ENCODE measurements at regions of chr11 and their contacts with region 1.

Region 1: DNA sequence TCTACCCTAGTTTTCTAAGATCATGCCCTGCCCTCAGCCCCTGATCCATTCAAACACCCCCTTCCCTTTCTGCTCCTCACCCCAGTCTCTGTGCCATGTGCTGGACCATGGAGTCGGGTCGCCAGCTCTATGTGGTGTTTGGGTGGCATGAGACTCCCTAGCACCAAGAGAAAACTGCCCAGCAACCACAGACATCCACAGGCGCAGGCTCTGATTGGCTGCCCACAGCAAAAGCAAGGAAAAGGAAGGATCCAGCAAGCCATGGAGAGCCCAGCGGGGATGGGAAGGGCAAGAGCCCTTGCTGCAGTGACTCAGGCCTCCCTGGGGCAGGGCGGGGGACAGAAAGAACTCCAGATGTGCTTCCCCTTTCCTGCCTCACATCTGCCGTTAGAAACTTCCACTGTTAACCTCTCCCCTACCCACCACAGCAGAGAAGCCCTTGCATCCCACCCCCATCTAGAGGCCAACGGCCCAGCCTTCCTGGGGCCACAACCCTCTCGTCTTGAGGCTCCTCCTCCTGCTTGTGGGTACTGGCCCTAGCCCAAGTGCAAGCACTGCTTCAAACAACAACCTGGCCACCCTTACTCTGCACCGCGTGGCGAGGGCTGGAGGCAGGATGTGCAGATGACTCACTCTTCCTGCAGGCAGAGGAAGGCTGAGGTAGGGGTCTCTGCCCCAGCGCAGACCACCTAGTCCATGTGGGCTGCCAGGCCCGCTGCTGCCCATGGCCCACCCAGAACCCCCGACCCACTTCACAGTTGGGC is 9.7 kb upstream of the AHNAK start:
- DNase-seq: peak; percentile 96
- H3K4me3 ChIP-seq: peak overlapping the region; percentile 1 to 20 (median 8)
- H3K27ac ChIP-seq: peak overlapping the region; percentile 67
- H3K4me1 ChIP-seq: peaks cover 99% of the 10 kb centered on the region
- H3K27me3 ChIP-seq: no peaks in the 10 kb centered on the region
- CTCF ChIP-seq: no peak

Region 2: DNA sequence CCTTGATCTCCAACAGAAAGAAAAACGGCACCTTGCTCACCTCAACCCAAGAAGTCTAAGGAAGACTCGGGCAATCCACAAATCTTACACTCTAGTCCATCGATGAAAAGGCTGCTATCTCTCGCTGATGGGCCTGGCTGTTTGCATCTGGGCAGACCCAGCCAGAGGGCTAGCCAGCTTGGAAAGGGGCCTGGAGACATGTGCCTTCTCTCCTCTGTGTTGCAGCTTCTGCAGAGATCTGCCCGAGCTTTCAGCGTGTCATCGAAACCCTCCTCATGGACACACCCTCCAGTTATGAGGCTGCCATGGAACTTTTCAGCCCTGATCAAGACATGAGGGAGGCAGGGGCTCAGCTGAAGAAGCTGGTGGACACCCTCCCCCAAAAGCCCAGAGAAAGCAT is 134.3 kb before region 1 on chr11:
- CTCF ChIA-PET with region 1: interaction called, 16 read pairs
- dilution Hi-C with region 1: no loop called
- in situ Hi-C with region 1: loop called in 1 of 2 experiments (anchors 5 kb)
- intact Hi-C with region 1: loop called (anchors 1 kb)
- DNase-seq: no peak
- H3K4me3 ChIP-seq: no peak overlapping the region
- H3K27ac ChIP-seq: no peak overlapping the region
- H3K4me1 ChIP-seq: peaks cover 4% of the 10 kb centered on the region
- H3K27me3 ChIP-seq: peaks cover 3% of the 10 kb centered on the region
- CTCF ChIP-seq: no peak

Region 3: DNA sequence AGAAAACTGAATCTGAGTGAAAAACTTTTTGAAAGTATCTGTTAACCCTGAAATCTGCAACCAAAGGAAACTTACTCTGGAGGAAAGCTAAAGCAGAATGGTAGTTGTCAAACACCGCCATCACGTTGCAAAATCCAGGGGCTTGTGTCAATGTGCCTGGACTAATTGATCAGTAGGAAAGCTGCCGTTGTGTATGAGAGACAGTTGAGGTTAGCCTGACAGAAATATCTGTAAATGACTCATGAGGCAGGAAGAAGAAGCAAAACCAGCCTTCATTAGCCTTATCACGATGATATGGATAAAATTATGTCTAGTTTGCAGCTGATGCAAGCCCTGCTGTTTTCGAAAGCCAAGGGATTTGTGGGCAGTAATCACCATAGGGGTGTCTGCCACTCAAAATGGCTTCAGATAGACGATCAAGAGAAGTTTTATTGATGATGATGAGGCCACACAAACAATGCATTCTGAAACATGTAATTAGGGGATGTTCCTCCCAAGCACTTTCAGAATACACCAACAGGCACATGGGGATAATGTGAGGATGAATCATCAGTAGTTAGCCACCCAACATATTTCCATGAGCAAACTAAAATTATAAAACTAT is 128.6 kb before region 1 on chr11:
- CTCF ChIA-PET with region 1: interaction called, 16 read pairs
- dilution Hi-C with region 1: no loop called
- in situ Hi-C with region 1: loop called in 1 of 2 experiments (anchors 5 kb)
- intact Hi-C with region 1: loop called (anchors 1 kb)
- DNase-seq: no peak
- H3K4me3 ChIP-seq: no peak overlapping the region
- H3K27ac ChIP-seq: no peak overlapping the region
- H3K4me1 ChIP-seq: peaks cover 4% of the 10 kb centered on the region
- H3K27me3 ChIP-seq: peaks cover 3% of the 10 kb centered on the region
- CTCF ChIP-seq: no peak

Region 4: GRCh38 chr11:62497132-62497915 is 59.0 kb before region 1 on chr11:
- CTCF ChIA-PET with region 1: no interaction called
- dilution Hi-C with region 1: loop called (anchors 10 kb)
- in situ Hi-C with region 1: no loop called
- intact Hi-C with region 1: loop called (anchors 1 kb)
- DNase-seq: peak; percentile 84
- H3K4me3 ChIP-seq: no peak overlapping the region
- H3K27ac ChIP-seq: peak overlapping the region; percentile 66
- H3K4me1 ChIP-seq: peaks cover 35% of the 10 kb centered on the region
- H3K27me3 ChIP-seq: no peaks in the 10 kb centered on the region
- CTCF ChIP-seq: peak; percentile 44 to 63

Region 5: GRCh38 chr11:62542750-62543567 is 13.3 kb before region 1 on chr11:
- CTCF ChIA-PET with region 1: interaction called, 37 read pairs
- dilution Hi-C with region 1: no loop called
- in situ Hi-C with region 1: no loop called
- intact Hi-C with region 1: loop called (anchors 1 kb)
- DNase-seq: peak; percentile 78
- H3K4me3 ChIP-seq: peak overlapping the region; percentile 82 to 99 (median 91)
- H3K27ac ChIP-seq: peak overlapping the region; percentile 86
- H3K4me1 ChIP-seq: peaks cover 59% of the 10 kb centered on the region
- H3K27me3 ChIP-seq: no peaks in the 10 kb centered on the region
- CTCF ChIP-seq: peak; percentile 78 to 98

Region 6: DNA sequence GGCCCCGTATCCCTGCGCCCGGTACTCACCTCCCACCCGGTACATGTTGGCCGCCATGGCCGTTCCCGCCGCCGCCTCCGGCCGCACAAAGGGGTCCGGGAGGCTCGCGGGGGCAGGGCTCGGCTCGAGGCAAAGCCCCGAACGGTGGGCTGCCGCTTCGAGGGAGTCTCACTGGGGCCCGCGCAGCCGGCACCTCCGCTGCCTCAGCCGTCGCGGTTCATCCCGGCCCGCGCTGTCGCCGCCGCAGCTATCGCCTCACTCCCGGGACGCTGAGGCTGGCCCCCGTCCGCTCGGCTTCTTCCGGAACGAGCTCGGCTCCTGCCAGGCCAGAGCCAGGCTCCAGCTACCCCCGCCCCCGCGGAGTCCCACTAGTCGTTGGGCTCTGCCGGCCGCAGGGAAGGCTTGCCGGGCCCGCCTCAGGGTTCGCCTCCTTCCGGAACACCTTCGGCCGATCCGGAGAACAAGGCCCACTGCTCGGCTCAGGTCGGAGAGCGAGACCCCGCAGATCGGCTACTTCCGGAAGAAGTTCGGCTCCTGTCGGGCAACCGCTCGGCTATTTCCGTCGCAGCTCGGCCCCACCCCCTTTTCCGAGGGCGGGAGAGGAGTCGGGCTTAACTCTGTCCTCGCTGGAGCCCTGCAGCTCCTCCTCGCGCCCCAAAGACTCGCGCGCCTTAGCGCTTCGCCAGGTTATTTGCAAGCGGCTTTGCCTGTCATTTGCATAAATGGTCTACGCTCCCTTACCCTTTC is 45.3 kb after region 1 on chr11 and contains the start of gene MTA2:
- CTCF ChIA-PET with region 1: no interaction called
- dilution Hi-C with region 1: loop called (anchors 5 kb)
- in situ Hi-C with region 1: no loop called
- intact Hi-C with region 1: no loop called
- DNase-seq: peak; percentile 99
- H3K4me3 ChIP-seq: peak within 1 kb of the TSS; percentile 68 to 88 (median 78)
- H3K27ac ChIP-seq: peak within 1 kb of the TSS; percentile 66
- H3K4me1 ChIP-seq: peaks cover 30% of the 10 kb centered on the region
- H3K27me3 ChIP-seq: no peaks in the 10 kb centered on the region
- CTCF ChIP-seq: no peak
- total RNA-seq, gene MTA2: 157 to 169 TPM

Region 7: GRCh38 chr11:62627714-62628113 is 71.4 kb after region 1 on chr11:
- CTCF ChIA-PET with region 1: interaction called, 16 read pairs
- dilution Hi-C with region 1: no loop called
- in situ Hi-C with region 1: no loop called
- intact Hi-C with region 1: no loop called
- DNase-seq: no peak
- H3K4me3 ChIP-seq: no peak overlapping the region
- H3K27ac ChIP-seq: no peak overlapping the region
- H3K4me1 ChIP-seq: no peaks in the 10 kb centered on the region
- H3K27me3 ChIP-seq: no peaks in the 10 kb centered on the region
- CTCF ChIP-seq: peak in 1 of 2 donors; percentile 23

Region 8: GRCh38 chr11:62645956-62646824 is 89.9 kb after region 1 on chr11 and contains the start of gene GANAB:
- CTCF ChIA-PET with region 1: no interaction called
- dilution Hi-C with region 1: no loop called
- in situ Hi-C with region 1: no loop called
- intact Hi-C with region 1: no loop called
- DNase-seq: peak; percentile 97
- H3K4me3 ChIP-seq: peak within 1 kb of the TSS; percentile 68 to 82 (median 80)
- H3K27ac ChIP-seq: peak within 1 kb of the TSS; percentile 63
- H3K4me1 ChIP-seq: peaks cover 12% of the 10 kb centered on the region
- H3K27me3 ChIP-seq: no peaks in the 10 kb centered on the region
- CTCF ChIP-seq: no peak
- total RNA-seq, gene GANAB: 180 to 258 TPM

Measured in mammary epithelial cell (primary cell).